ENCODE measurements at regions of chr20 and their contacts with region 1.

Region 1: DNA sequence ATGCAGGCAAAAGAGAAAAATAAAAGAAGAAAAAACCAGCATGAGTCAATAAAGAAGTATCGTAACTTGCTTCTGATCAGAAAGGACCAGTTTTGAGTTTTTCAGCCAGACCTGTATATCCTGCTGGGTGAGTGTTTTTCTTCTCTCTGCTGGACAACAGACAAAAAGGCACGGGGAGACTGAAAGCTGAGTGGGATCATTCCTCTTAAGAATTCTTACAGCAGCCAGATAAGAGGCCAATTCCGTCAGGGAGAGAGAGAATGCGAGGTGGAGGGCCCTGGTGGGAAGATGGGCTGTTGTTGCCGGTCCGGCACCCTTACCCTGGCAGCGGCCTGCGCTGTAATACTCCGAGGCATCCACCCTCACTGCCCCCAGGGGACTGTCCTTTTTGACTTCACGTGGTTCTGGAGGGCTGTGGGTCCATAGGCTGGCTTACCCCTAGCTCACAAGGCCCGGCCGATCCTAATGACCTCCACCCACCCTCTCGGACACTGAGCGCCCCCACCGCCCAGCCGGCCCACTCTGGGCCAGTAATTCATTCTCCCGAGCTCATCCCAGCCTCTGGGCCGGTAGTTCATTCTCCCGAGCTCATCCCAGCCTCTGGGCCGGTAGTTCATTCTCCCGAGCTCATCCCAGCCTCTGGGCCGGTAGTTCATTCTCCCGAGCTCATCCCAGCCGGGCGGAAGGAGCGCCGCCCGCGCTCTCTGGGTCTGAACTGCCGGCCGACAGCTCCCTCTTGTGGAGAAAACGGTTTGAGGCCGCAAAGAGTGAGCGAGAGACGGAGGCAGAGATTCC is 118.3 kb upstream of the SIRPA start:
- DNase-seq: peak; percentile 91
- ATAC-seq: peak; percentile 92
- H3K4me3 Mint-ChIP-seq: peak overlapping the region; percentile 66
- H3K27ac Mint-ChIP-seq: peak overlapping the region; percentile 52
- H3K4me1 Mint-ChIP-seq: peaks cover 15% of the 10 kb centered on the region
- H3K27me3 Mint-ChIP-seq: peaks cover 3% of the 10 kb centered on the region

Region 2: GRCh38 chr20:1503564-1504227 is 273.2 kb before region 1 on chr20:
- CTCF ChIA-PET with region 1: interaction called, 29 read pairs
- POLR2A ChIA-PET with region 1: no interaction called
- intact Hi-C with region 1: loop called (anchors 1 to 2 kb)
- DNase-seq: peak; percentile 88
- ATAC-seq: peak; percentile 100
- H3K4me3 Mint-ChIP-seq: no peak overlapping the region
- H3K27ac Mint-ChIP-seq: no peak overlapping the region
- H3K4me1 Mint-ChIP-seq: peaks cover 6% of the 10 kb centered on the region
- H3K27me3 Mint-ChIP-seq: peaks cover 19% of the 10 kb centered on the region

Region 3: GRCh38 chr20:1533059-1533458 is 243.8 kb before region 1 on chr20:
- CTCF ChIA-PET with region 1: interaction called, 4 read pairs
- POLR2A ChIA-PET with region 1: no interaction called
- intact Hi-C with region 1: loop called (anchors 2 to 5 kb)
- DNase-seq: peak; percentile 33
- ATAC-seq: peak; percentile 60
- H3K4me3 Mint-ChIP-seq: no peak overlapping the region
- H3K27ac Mint-ChIP-seq: no peak overlapping the region
- H3K4me1 Mint-ChIP-seq: peaks cover 8% of the 10 kb centered on the region
- H3K27me3 Mint-ChIP-seq: no peaks in the 10 kb centered on the region

Region 4: GRCh38 chr20:1752045-1752444 is 24.8 kb before region 1 on chr20:
- CTCF ChIA-PET with region 1: interaction called, 10 read pairs
- POLR2A ChIA-PET with region 1: no interaction called
- intact Hi-C with region 1: no loop called
- DNase-seq: no peak
- ATAC-seq: no peak
- H3K4me3 Mint-ChIP-seq: no peak overlapping the region
- H3K27ac Mint-ChIP-seq: no peak overlapping the region
- H3K4me1 Mint-ChIP-seq: no peaks in the 10 kb centered on the region
- H3K27me3 Mint-ChIP-seq: no peaks in the 10 kb centered on the region

Region 5: DNA sequence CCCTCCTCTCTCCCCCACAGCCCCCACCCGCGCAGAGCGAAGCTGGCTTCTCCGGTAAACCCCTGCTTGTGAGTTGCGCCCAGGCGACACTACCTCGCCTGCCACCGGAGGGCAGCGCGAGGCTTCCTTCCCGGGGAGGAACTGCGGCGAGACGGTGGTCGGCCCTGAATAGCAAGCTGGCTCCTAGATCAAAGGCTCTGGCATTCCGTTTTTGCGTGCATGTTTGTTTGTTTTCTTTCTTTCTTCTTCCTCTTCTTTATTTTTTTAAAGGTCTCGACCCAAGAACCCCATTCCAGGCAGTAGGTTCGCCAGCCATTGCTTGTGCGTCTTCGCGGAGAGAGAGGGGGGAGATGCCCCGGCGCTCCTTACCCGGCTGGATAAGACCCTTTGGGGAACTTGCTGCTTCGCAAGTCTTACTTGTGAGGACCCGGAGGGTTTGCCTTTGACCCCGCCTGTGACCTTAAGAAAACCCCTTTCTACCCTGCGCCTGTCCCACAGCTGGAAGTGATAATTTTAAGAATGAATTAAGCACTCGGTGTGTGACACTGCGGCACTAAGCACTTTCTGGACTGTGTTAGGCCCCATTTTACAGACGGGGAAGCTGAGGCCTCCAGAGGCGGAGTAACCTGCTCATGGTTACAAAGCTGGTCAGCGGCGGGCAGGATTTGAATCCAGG is 25.6 kb after region 1 on chr20:
- CTCF ChIA-PET with region 1: interaction called, 10 read pairs
- POLR2A ChIA-PET with region 1: interaction called, 3 read pairs
- intact Hi-C with region 1: no loop called
- DNase-seq: peak; percentile 74
- ATAC-seq: peak; percentile 79
- H3K4me3 Mint-ChIP-seq: peak overlapping the region; percentile 59
- H3K27ac Mint-ChIP-seq: no peak overlapping the region
- H3K4me1 Mint-ChIP-seq: peaks cover 7% of the 10 kb centered on the region
- H3K27me3 Mint-ChIP-seq: peaks cover 43% of the 10 kb centered on the region

Measured in activated CD4-positive, alpha-beta T cell treated with anti-CD3 and anti-CD28 coated beads for 36 hours (primary cell).